K562 (cell line): ENCODE measurements at regions of chr1 and their contacts with region 1.

Region 1: GRCh38 chr1:205711104-205712020 is 31.1 kb upstream of the SLC45A3 start:
- DNase-seq: peak; percentile 79 to 91 (median 85)
- ATAC-seq: peak; percentile 93
- H3K4me3 ChIP-seq: no peak overlapping the region
- H3K27ac ChIP-seq: no peak overlapping the region
- H3K4me1 ChIP-seq: peaks cover 0 to 18% of the 10 kb centered on the region in 2 experiments; a peak in 3 of 5 replicates
- H3K27me3 ChIP-seq: no peaks in the 10 kb centered on the region
- CTCF ChIP-seq: peak; percentile 87 to 98 (median 95)
- EP300 ChIP-seq: 0 out of 2 replicates have a peak, but pooled peaks have one; percentile 13
- POLR2A ChIP-seq: no peak
- RAD21 ChIP-seq: peak; percentile 99

Region 2: GRCh38 chr1:204846546-204847167 is 864.7 kb before region 1 on chr1:
- CTCF ChIA-PET with region 1: no interaction called
- POLR2A ChIA-PET with region 1: no interaction called
- in situ Hi-C with region 1: no loop called
- intact Hi-C with region 1: no loop called
- DNase-seq: no peak
- ATAC-seq: no peak
- H3K4me3 ChIP-seq: no peak overlapping the region
- H3K27ac ChIP-seq: no peak overlapping the region
- H3K4me1 ChIP-seq: no peaks in the 10 kb centered on the region
- H3K27me3 ChIP-seq: peaks cover 15 to 31% of the 10 kb centered on the region in 2 experiments
- CTCF ChIP-seq: no peak
- EP300 ChIP-seq: no peak
- POLR2A ChIP-seq: no peak
- RAD21 ChIP-seq: no peak

Region 3: GRCh38 chr1:205528887-205529825 is 182.2 kb before region 1 on chr1:
- CTCF ChIA-PET with region 1: no interaction called
- POLR2A ChIA-PET with region 1: interaction called, 5 read pairs
- in situ Hi-C with region 1: no loop called
- intact Hi-C with region 1: loop called (anchors 1 kb)
- DNase-seq: peak; percentile 87 to 96 (median 94)
- ATAC-seq: peak; percentile 95
- H3K4me3 ChIP-seq: peak overlapping the region; percentile 32
- H3K27ac ChIP-seq: no peak overlapping the region
- H3K4me1 ChIP-seq: peaks cover 0 to 37% of the 10 kb centered on the region in 2 experiments; a peak in 3 of 5 replicates
- H3K27me3 ChIP-seq: peaks cover 37 to 86% of the 10 kb centered on the region in 2 experiments; a peak in 4 of 5 replicates
- CTCF ChIP-seq: peak; percentile 92 to 95 (median 94)
- EP300 ChIP-seq: no peak
- POLR2A ChIP-seq: no peak
- RAD21 ChIP-seq: peak; percentile 81 to 95

Region 4: DNA sequence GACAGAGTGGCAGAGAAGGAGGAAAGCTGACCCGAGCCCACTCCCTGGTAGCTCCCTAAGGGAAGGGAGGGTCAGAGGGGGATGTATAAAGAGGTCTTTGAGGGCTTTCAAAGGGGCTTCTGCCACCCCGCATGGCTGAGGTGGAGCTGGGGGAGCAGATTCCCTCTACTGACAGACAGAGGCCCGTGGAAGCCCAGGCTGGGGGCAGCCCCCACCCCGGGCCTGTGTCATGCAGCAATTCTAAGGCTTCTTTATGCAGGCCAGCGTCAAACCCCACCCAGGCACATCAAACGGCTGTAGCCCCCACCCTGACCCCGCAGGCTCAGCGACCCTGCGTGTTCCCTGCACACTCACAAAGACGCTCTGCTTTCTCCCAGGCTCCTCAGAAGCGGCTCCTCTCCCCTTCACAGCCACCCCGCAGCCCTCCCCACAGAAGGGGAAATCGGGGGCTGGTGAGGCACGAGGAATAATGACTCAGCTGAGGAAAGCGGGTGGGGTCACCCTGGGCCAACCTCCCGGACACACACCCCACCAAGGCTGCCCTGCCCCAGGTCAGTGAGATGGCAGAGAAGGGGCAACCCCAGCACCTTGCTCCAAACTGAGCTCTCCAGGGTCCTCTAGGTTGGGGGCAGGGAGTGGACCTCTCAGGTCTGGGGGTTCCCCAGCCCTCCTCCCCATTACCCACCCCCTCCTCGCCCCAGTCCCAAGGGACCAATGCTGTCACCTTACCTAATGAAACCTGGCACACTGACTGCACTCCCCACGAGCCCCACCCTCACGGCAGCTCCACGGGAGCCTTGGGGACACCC is 41.8 kb before region 1 on chr1:
- CTCF ChIA-PET with region 1: interaction called, 29 read pairs
- POLR2A ChIA-PET with region 1: interaction called, 3 read pairs
- in situ Hi-C with region 1: no loop called
- intact Hi-C with region 1: loop called (anchors 1 kb)
- DNase-seq: peak in 3 of 4 experiments; percentile 48 to 86 (median 83)
- ATAC-seq: peak; percentile 16; the same call in 2 of the 3 replicates
- H3K4me3 ChIP-seq: no peak overlapping the region
- H3K27ac ChIP-seq: no peak overlapping the region
- H3K4me1 ChIP-seq: peaks cover 9 to 17% of the 10 kb centered on the region in 2 experiments; a peak in 4 of 5 replicates
- H3K27me3 ChIP-seq: peaks cover 0 to 9% of the 10 kb centered on the region in 2 experiments; a peak in 1 of 5 replicates
- CTCF ChIP-seq: no peak
- EP300 ChIP-seq: no peak
- POLR2A ChIP-seq: no peak
- RAD21 ChIP-seq: no peak